Heart right ventricle (tissue), 16 donors: ENCODE measurements at regions of chr18 and their contacts with region 1.

Region 1: DNA sequence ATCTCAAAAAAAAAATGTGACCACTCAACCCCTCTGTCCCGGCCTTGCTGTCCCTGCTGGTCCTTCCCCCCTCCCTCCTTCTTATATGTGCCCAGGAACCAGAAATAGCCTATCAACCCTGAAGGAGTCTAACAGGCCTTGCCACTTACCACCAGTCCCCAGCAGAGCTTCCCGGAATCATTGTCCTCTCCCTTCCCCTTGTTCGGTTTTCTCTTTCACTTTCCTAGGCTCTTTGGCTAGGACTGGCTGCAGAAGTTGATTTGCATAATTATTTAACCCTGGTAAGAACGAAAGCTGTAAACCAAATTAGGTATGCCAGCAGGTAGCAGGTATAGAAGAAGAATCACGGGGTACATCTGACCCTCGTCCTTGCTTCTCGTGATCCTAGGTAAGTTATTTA is 72.6 kb upstream of the ZNF532 start:
- DNase-seq: no peak
- ATAC-seq: no peak
- H3K4me3 ChIP-seq: no peak overlapping the region
- H3K27ac ChIP-seq: no peak overlapping the region
- H3K4me1 ChIP-seq: peaks cover 0 to 40% (median 25%) of the 10 kb centered on the region in 9 donors
- H3K27me3 ChIP-seq: no peaks in the 10 kb centered on the region
- CTCF ChIP-seq: no peak

Region 2: DNA sequence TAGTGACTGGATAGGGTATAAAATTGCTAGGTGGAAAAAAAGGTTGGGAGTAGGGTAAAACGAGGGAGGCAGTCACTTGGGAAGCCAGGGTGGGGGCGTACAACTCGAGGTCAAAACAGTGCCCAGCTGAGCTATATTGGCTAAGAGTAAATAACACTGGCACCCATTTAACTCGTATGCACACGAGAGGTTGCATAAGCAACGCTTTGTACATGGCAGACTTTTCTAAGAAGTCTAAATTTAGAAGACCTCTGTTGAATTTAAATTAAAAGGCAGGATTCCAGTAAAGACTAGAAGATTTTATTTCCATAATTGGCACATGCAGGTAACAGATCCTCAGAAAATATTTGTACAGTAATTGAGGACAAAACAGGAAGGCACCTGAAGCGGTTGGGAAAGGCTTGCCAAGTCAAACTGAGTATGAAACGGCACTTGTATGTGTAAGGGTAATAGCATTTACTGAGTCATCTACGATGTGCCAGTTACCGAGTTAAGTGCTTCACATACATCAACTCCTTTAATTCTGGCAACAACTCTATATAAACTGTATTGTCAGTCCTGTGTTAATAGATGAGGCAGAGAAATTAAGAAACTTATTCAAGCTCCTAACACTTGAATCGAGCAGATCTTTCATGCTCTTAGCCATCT is 122.2 kb before region 1 on chr18:
- intact Hi-C with region 1: no loop called
- DNase-seq: no peak
- ATAC-seq: no peak
- H3K4me3 ChIP-seq: peak overlapping the region in 2 of 10 donors; percentile 76 to 78
- H3K27ac ChIP-seq: peak overlapping the region in 8 of 10 donors; percentile 79 to 99 (median 97)
- H3K4me1 ChIP-seq: peaks cover 0 to 42% (median 26%) of the 10 kb centered on the region in 9 donors
- H3K27me3 ChIP-seq: no peaks in the 10 kb centered on the region
- CTCF ChIP-seq: no peak

Region 3: DNA sequence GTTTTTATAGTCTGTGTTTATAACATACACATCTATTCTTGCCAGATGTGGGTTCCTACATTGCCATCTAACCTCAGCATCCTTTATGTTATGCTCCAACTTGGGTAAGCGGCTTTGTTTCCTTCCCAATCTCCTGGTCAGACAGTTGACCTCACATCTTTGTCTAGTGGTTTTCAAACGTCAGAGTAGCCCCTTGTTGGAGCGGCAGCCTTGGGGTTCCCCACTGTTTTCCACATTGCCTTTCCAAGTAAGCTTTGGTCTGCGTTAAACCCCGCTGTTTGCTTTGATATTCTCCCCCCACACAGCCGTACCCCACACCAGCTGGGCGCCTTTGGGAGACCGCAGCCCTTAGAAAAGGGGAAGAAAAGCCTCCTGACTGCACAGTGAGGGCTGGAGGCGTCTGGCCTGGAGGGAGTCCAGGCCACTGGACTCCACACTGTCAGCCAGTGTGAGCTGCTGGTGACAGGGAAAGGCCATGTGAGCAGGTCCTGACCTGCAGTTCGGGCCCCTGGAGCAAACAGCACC is 37.5 kb before region 1 on chr18:
- intact Hi-C with region 1: no loop called
- DNase-seq: peak; percentile 36 to 43
- ATAC-seq: peak; percentile 81 to 90 (median 86)
- H3K4me3 ChIP-seq: no peak overlapping the region
- H3K27ac ChIP-seq: peak overlapping the region in 7 of 10 donors; percentile 2 to 65 (median 62)
- H3K4me1 ChIP-seq: peaks cover 0 to 21% (median 15%) of the 10 kb centered on the region in 9 donors
- H3K27me3 ChIP-seq: no peaks in the 10 kb centered on the region
- CTCF ChIP-seq: no peak

Region 4: GRCh38 chr18:58842978-58843687 is 51.0 kb after region 1 on chr18:
- intact Hi-C with region 1: loop called in 2 of 10 experiments (anchors 5 kb)
- DNase-seq: peak; percentile 48 to 60
- ATAC-seq: peak; percentile 65 to 96 (median 84)
- H3K4me3 ChIP-seq: no peak overlapping the region
- H3K27ac ChIP-seq: peak overlapping the region in 6 of 10 donors; percentile 7 to 65 (median 53)
- H3K4me1 ChIP-seq: peaks cover 0 to 47% (median 11%) of the 10 kb centered on the region in 9 donors
- H3K27me3 ChIP-seq: peaks cover 0 to 7% (median 0%) of the 10 kb centered on the region in 7 donors
- CTCF ChIP-seq: no peak

Region 5: GRCh38 chr18:58896268-58896667 is 104.2 kb after region 1 on chr18:
- intact Hi-C with region 1: no loop called
- DNase-seq: no peak
- ATAC-seq: no peak
- H3K4me3 ChIP-seq: no peak overlapping the region
- H3K27ac ChIP-seq: peak overlapping the region in 5 of 10 donors; percentile 27 to 72 (median 45)
- H3K4me1 ChIP-seq: peaks cover 5 to 92% (median 64%) of the 10 kb centered on the region in 9 donors
- H3K27me3 ChIP-seq: no peaks in the 10 kb centered on the region
- CTCF ChIP-seq: no peak

Region 6: GRCh38 chr18:60019463-60019840 is 1227.4 kb after region 1 on chr18:
- intact Hi-C with region 1: no loop called
- DNase-seq: no peak
- ATAC-seq: no peak
- H3K4me3 ChIP-seq: no peak overlapping the region
- H3K27ac ChIP-seq: no peak overlapping the region
- H3K4me1 ChIP-seq: no peaks in the 10 kb centered on the region
- H3K27me3 ChIP-seq: no peaks in the 10 kb centered on the region
- CTCF ChIP-seq: no peak